ENCODE measurements at regions of chr2 and their contacts with region 1.

Region 1: GRCh38 chr2:186641807-186642321 is 52.0 kb upstream of the FAM171B start:
- DNase-seq: peak in 6 of 9 donors; percentile 13 to 54 (median 45)
- ATAC-seq: peak; percentile 73
- H3K4me3 ChIP-seq: no peak overlapping the region
- H3K4me3 Mint-ChIP-seq: no peak overlapping the region
- H3K27ac ChIP-seq: no peak overlapping the region
- H3K27ac Mint-ChIP-seq: peak overlapping the region in 1 of 9 donors; percentile 18
- H3K4me1 ChIP-seq: no peaks in the 10 kb centered on the region
- H3K4me1 Mint-ChIP-seq: peaks cover 0 to 26% (median 0%) of the 10 kb centered on the region in 7 donors
- H3K27me3 ChIP-seq: no peaks in the 10 kb centered on the region
- H3K27me3 Mint-ChIP-seq: no peaks in the 10 kb centered on the region

Region 2: DNA sequence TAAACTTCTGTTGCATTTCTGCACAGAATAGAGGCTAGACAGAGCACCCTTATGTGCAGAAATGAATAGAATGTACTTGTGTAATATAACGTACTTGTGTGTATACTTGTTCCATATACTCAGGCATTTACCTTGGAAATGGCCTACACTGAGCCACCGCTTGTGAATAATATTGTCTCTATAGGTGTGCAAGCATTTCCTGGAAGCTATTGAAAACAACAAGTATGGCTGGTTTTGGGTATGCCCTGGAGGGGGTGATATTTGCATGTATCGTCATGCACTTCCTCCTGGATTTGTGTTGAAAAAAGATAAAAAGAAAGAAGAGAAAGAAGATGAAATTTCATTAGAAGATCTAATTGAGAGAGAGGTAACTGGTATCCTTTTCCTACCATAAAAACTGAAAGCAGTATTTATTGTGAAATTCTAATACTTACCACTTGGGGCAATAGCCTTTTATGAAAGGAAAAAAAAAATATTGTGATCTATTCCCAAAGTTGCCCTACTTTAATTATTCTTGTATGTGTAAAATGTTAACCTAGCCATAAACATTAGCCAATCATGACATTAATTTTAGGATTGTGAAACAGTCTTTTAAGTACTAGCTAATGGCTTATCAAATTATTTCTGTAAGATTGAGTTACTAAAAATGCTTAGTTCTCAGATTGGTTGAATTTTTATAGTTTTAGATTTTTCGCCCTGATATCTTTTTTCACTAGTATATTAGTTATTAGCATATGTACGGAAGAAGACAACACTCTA is 137.8 kb before region 1 on chr2:
- CTCF ChIA-PET with region 1: interaction called, 67 read pairs
- POLR2A ChIA-PET with region 1: no interaction called
- intact Hi-C with region 1: loop called (anchors 1 kb)
- DNase-seq: peak in 5 of 9 donors; percentile 17 to 24 (median 18)
- ATAC-seq: peak; percentile 56
- H3K4me3 ChIP-seq: no peak overlapping the region
- H3K4me3 Mint-ChIP-seq: no peak overlapping the region
- H3K27ac ChIP-seq: no peak overlapping the region
- H3K27ac Mint-ChIP-seq: peak overlapping the region in 5 of 9 donors; percentile 4 to 88 (median 53)
- H3K4me1 ChIP-seq: no peaks in the 10 kb centered on the region
- H3K4me1 Mint-ChIP-seq: peaks cover 7 to 30% (median 16%) of the 10 kb centered on the region in 7 donors
- H3K27me3 ChIP-seq: no peaks in the 10 kb centered on the region
- H3K27me3 Mint-ChIP-seq: no peaks in the 10 kb centered on the region

Measured in naive thymus-derived CD4-positive, alpha-beta T cell (primary cell).